ENCODE measurements at regions of chr10 and their contacts with region 1.

Region 1: DNA sequence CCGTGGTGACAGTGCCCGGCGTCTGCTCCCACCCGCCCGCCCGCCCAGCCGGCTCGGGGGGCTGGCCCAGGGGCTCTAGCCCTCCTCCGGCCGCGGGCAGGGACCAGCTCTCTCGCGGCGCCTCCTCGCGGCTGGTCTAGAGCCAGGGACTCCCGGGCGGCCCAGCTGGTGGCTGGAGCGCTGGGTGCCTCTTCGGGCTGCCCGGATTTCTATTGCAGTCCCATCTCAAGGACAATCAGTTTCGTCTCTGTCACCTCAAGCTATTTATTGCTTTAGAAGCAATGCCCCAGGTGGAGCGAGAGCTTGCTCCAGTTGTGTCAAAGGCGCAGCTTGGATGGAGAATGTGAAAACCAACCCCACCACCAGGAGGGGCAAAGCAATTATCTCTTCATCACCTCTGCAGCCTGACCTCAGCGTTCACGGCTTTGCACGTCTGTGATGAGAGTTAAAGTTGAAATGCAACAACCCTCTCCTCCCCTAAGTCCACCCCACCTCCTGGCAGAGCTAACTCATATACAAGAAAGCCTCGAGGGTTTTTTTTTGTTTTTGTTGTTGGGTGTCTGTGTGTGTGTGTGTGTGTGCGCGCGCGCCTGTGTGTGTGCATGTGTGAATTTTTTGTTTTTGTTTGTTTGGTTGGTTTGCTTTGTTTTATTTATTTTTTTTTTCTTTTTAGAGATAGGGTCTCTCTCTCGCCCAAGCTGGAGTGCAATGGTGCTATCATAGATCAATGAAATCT is at the start of gene ITGA8:
- H3K4me3 ChIP-seq: peak within 1 kb of the TSS; percentile 47
- H3K27ac ChIP-seq: peak within 1 kb of the TSS; percentile 79; the same call in 1 of the 2 replicates
- H3K4me1 ChIP-seq: peaks cover 19% of the 10 kb centered on the region
- CTCF ChIP-seq: peak; percentile 90

Region 2: DNA sequence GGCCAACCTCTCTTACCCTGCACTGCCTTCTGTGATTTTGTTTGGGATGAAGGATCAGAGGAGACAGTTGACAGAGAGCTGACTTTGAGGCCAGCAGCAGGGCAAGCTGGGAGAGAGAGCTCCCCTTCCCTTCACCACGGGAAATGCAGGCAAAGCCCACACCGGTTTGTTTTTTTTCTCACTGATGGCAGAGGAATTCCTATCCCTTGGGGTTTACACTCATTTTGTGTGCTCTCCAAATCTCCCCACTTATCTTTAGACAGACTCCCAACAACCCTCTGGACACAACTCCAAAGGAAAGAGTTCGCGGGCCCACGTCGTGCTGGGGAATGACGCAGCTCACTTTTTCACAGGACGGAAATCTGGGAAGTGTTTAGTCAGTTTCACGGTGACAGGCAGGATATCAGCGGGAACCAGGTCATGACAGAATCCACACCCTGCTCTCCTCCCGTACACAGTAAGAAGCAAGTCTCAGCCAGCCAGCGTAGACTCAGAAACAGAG is 280.7 kb before region 1 on chr10:
- CTCF ChIA-PET with region 1: interaction called, 17 read pairs
- POLR2A ChIA-PET with region 1: no interaction called
- H3K4me3 ChIP-seq: no peak overlapping the region
- H3K27ac ChIP-seq: peak overlapping the region; percentile 50
- H3K4me1 ChIP-seq: peaks cover 6% of the 10 kb centered on the region
- CTCF ChIP-seq: peak; percentile 21; the same call in 1 of the 2 replicates

Region 3: DNA sequence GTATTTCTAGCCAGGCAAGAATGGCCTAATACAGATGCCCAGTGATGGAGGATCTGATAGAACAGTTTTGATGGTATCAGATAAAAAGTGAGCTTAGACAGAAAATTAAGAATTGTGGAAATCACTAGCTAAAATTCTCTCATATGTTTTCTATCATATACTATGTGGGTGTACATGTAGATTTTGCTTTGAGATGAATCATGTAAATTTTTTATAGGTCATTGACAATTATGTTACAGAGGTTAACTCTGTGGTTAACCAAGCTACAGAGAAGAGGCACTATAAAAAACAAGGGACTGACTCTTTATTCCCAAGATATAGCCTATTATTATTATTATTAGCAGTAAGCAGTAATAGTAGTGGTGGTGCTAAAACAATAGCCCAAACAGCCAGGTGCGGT is 156.8 kb before region 1 on chr10:
- CTCF ChIA-PET with region 1: no interaction called
- POLR2A ChIA-PET with region 1: no interaction called
- H3K4me3 ChIP-seq: no peak overlapping the region
- H3K27ac ChIP-seq: no peak overlapping the region
- H3K4me1 ChIP-seq: no peaks in the 10 kb centered on the region
- CTCF ChIP-seq: no peak

Region 4: DNA sequence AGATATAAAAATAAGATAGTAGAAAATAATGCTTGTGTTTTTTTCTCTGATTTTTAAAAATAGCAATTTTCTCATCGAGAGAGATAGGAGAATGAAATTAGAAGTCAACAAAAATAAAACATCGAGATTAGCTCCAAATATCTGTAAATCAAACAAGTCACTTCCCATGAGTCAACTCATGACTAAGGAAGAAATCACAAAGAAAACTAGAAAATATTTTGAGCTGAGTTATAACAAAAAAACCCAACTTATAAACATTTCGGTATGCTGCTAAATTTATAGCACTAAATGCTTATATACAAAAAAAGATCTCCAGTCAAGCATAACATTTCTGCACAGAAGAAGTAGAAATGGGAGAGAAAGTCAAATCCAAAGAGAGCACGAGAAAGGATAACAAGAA is 140.5 kb before region 1 on chr10:
- CTCF ChIA-PET with region 1: interaction called, 17 read pairs
- POLR2A ChIA-PET with region 1: no interaction called
- H3K4me3 ChIP-seq: no peak overlapping the region
- H3K27ac ChIP-seq: no peak overlapping the region
- H3K4me1 ChIP-seq: no peaks in the 10 kb centered on the region
- CTCF ChIP-seq: no peak

Region 5: DNA sequence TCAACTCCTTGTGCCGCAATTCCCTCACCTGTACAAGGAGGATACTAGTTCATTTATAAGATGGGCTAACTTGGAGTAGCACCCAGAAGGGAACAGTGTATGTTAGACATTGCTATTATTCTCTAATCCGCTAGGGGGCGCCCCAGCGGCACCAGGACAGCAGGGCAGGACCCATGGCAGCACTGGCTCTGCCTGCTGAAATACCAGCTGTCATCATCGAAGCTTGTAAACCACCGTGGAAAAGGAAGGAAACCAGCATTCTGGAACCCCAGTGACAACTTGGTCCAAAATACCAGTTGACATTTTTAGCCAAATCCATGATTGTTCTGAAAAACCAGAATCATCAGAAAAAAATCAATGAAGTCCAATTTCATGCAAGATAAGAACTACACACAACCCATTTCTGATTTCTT is 134.8 kb before region 1 on chr10:
- CTCF ChIA-PET with region 1: interaction called, 17 read pairs
- POLR2A ChIA-PET with region 1: no interaction called
- H3K4me3 ChIP-seq: no peak overlapping the region
- H3K27ac ChIP-seq: no peak overlapping the region
- H3K4me1 ChIP-seq: no peaks in the 10 kb centered on the region
- CTCF ChIP-seq: peak; percentile 64

Region 6: DNA sequence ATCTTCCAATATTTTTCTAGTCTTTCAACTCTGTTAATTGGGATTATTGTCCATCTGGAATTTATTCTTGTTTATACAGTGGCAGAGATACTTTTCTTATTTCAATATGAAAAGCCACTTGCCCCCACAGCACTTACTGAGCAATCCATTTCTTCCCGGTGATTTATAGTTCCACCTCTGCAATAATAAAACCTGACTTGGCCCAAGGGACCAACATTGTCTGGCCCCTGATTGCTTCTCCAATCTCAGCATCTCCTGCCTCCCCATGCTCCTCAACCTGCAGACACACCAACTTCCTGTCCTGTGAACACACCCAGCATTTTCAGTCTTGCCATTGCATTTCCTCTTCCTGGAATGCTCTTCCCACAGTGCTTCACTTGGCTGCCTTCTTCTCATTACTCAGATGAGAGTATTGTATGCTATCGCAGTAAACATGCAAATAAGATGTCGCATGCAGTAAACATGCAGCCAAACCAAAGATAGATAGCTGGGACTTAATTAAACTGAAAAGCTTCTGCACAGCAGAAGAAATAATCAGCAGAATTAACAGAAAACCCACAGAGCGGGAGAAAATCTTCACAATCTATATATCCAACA is 19.9 kb before region 1 on chr10:
- CTCF ChIA-PET with region 1: no interaction called
- POLR2A ChIA-PET with region 1: no interaction called
- H3K4me3 ChIP-seq: no peak overlapping the region
- H3K27ac ChIP-seq: no peak overlapping the region
- H3K4me1 ChIP-seq: peaks cover 12% of the 10 kb centered on the region
- CTCF ChIP-seq: no peak

Region 7: GRCh38 chr10:15824498-15824897 is 104.4 kb after region 1 on chr10:
- CTCF ChIA-PET with region 1: interaction called, 14 read pairs
- POLR2A ChIA-PET with region 1: no interaction called
- H3K4me3 ChIP-seq: no peak overlapping the region
- H3K27ac ChIP-seq: no peak overlapping the region
- H3K4me1 ChIP-seq: peaks cover 5% of the 10 kb centered on the region
- CTCF ChIP-seq: no peak

Region 8: DNA sequence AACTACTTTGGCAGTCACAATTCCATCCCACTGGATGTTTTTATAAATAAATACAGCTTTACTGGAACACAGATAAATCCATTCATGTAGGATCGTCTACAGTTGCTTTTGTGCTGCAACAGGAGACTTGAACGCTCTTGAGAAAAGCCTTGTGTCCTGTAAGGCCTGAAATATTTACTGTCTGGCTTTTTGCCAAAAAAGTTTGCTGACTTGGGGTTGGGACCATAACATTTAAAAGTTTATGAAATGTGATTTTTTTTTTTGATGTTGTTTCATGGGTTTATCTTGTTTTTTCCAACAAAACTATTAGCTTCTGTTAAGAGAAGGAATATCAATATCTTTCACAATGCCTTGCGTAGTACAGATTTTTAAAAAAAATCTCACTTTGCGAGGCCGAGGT is 211.3 kb after region 1 on chr10:
- CTCF ChIA-PET with region 1: no interaction called
- POLR2A ChIA-PET with region 1: no interaction called
- H3K4me3 ChIP-seq: no peak overlapping the region
- H3K27ac ChIP-seq: no peak overlapping the region
- H3K4me1 ChIP-seq: no peaks in the 10 kb centered on the region
- CTCF ChIP-seq: no peak